ENCODE measurements at regions of chr1 and their contacts with region 1.

Region 1: DNA sequence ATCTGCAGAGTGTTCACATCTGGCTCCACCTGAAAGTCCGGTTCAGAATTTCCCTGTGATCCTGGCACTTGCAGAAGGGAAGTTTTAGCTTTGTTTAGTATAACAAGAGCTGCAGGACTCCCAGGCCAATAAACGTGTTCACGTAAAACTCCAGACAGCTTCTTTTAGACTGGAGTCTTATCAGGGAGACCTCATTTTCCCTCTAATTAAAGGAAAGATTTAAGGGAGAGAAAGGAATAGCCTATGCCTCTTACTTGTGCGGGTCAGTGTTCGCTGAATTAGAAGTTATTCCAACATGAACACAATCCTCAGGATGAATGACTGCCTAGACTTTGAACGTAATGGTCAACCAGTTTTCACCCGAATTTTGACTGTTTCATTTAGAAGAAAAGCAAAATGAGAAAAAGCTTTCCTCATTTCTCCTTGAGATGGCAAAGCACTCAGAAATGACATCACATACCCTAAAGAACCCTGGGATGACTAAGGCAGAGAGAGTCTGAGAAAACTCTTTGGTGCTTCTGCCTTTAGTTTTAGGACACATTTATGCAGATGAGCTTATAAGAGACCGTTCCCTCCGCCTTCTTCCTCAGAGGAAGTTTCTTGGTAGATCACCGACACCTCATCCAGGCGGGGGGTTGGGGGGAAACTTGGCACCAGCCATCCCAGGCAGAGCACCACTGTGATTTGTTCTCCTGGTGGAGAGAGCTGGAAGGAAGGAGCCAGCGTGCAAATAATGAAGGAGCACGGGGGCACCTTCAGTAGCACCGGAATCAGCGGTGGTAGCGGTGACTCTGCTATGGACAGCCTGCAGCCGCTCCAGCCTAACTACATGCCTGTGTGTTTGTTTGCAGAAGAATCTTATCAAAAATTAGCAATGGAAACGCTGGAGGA is 202.1 kb upstream of the SGIP1 start:
- DNase-seq: peak; percentile 82
- H3K4me3 Mint-ChIP-seq: peak overlapping the region; percentile 98
- H3K27ac Mint-ChIP-seq: peak overlapping the region; percentile 97
- H3K4me1 Mint-ChIP-seq: peaks cover 56% of the 10 kb centered on the region
- H3K27me3 Mint-ChIP-seq: no peaks in the 10 kb centered on the region

Region 2: GRCh38 chr1:66253330-66253921 is 78.5 kb before region 1 on chr1:
- intact Hi-C with region 1: loop called (anchors 1 kb)
- DNase-seq: peak; percentile 82
- H3K4me3 Mint-ChIP-seq: no peak overlapping the region
- H3K27ac Mint-ChIP-seq: no peak overlapping the region
- H3K4me1 Mint-ChIP-seq: peaks cover 45% of the 10 kb centered on the region
- H3K27me3 Mint-ChIP-seq: no peaks in the 10 kb centered on the region

Region 3: DNA sequence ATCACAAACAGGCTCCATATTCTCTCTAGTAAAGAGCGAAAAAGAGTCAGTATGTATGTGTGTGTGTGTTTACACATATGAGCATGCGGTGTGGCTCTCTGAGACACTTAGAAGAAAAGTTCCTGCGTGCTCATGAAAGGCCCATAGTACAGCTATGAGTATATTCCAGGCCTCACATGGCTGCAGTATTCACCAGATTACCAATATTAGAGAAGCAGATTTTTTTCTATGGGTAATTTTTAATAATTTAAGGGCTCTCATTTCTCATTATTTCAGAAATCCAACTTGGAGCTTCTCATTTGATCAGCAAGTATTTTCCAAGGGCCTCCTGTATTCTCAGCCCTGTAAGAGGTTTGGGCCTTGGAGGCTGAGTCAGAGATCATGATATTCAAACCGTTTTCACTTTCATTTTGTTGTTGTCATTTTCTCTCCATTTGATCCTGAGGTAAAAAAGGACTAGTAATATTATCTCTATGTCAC is 30.9 kb before region 1 on chr1:
- intact Hi-C with region 1: loop called (anchors 1 kb)
- DNase-seq: peak; percentile 80
- H3K4me3 Mint-ChIP-seq: peak overlapping the region; percentile 76
- H3K27ac Mint-ChIP-seq: peak overlapping the region; percentile 82
- H3K4me1 Mint-ChIP-seq: peaks cover 31% of the 10 kb centered on the region
- H3K27me3 Mint-ChIP-seq: no peaks in the 10 kb centered on the region

Region 4: GRCh38 chr1:66436378-66437145 is 104.7 kb after region 1 on chr1:
- intact Hi-C with region 1: loop called (anchors 1 kb)
- DNase-seq: peak; percentile 80
- H3K4me3 Mint-ChIP-seq: no peak overlapping the region
- H3K27ac Mint-ChIP-seq: peak overlapping the region; percentile 7
- H3K4me1 Mint-ChIP-seq: peaks cover 33% of the 10 kb centered on the region
- H3K27me3 Mint-ChIP-seq: no peaks in the 10 kb centered on the region

Region 5: GRCh38 chr1:66521721-66522365 is 189.9 kb after region 1 on chr1:
- intact Hi-C with region 1: no loop called
- DNase-seq: no peak
- H3K4me3 Mint-ChIP-seq: no peak overlapping the region
- H3K27ac Mint-ChIP-seq: no peak overlapping the region
- H3K4me1 Mint-ChIP-seq: no peaks in the 10 kb centered on the region
- H3K27me3 Mint-ChIP-seq: peaks cover 11% of the 10 kb centered on the region

Region 6: GRCh38 chr1:67339623-67340343 is 1007.9 kb after region 1 on chr1:
- intact Hi-C with region 1: loop called (anchors 10 kb)
- DNase-seq: peak; percentile 85
- H3K4me3 Mint-ChIP-seq: peak overlapping the region; percentile 68
- H3K27ac Mint-ChIP-seq: peak overlapping the region; percentile 94
- H3K4me1 Mint-ChIP-seq: peaks cover 77% of the 10 kb centered on the region
- H3K27me3 Mint-ChIP-seq: no peaks in the 10 kb centered on the region

Measured in activated CD4-positive, alpha-beta T cell treated with anti-CD3 and anti-CD28 coated beads, Interleukin-2, amount 10 ng/mL, durations not matched to agents 24 days and 14 days (primary cell).